ENCODE measurements at regions of chr5 and their contacts with region 1.

Region 1: DNA sequence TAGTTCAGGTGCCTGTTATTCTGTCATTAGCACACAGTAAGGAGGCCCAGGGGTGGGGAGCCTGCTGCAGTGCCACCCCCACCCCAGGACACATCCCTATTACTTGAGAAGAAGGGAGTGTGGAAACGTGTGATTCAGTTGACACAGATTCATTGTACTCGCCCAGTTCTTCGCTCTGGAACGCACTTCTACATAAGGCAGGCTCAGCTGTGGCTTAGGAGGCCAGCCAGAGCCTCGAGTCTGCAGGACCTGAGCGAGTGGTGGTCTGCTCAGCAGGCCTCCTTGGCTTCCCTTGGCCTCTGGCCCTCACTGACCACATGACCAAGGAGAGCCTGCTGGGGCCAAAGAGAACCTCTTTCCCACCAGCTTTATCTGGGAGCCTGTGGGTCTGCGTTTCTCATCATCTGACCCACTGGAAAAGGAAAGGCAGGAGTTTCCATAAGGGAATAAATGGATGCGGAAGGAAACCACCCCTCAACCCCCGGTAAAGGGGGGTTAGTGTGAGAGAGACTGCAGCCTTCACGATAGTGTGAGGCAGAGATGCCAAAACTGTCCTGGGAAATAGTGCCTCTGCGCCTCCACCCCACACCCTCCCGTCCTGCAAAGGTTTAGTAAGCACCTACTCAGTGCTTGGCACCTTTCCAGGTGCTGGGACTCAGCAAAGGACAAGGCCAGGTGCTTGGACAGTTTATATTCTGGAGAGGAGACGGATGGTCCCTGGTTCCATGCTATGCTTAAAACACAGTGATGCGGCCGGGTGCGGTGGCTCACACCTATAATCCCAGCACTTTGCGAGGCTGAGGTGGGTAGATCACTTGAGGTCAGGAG is 73.7 kb downstream of the PPARGC1B start:
- DNase-seq: no peak
- ATAC-seq: no peak

Region 2: DNA sequence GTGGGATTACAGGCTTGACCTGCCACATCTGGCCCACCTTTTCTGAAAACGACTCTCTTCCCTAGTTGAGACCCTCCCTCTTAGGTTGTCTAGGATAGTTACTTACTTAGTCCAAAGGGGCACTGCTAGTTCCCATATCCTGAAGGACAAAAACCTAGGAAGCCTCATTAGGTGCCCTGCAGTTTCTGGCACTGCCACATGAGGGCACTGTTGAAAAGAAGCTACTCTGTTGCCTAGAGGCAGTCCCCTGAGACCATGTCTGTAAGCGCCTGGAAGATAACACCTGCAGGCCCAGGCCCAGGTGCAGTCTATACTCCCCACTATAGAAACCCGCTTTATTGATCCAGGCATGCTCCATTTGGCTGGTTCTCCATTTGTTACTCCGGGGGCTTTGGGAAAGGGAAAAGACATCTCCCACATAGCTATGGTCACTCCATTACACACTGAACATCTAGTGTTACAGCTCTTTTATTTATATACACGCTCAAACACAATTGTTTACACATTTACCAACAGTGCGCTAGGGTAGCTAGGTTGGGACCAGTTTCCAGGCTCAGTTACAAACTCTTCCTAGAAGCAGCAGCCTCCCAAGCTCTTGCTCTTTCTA is 147.2 kb before region 1 on chr5:
- intact Hi-C with region 1: no loop called
- DNase-seq: no peak
- ATAC-seq: peak; percentile 35

Region 3: GRCh38 chr5:149754172-149754880 is 49.5 kb before region 1 on chr5:
- intact Hi-C with region 1: no loop called
- DNase-seq: no peak
- ATAC-seq: no peak

Region 4: DNA sequence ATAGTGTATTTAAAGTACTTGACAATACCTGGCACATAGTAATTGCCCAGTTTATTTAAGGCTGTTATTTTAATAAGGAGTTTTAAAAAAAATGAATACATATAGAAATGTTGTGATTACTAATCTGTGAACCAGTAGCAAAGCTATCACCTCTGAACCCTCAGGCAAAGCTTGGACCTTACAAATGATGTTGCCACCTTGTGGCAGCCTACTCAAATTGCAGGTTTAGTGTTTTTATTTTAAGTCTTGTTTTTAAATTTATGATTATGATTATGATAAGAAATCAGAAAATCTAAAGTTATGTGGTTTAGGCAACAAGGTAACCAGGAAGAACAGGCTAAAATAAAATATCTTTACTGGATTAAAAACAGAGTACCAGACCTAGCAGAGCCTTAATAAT is 37.9 kb before region 1 on chr5:
- intact Hi-C with region 1: loop called (anchors 5 kb)
- DNase-seq: no peak
- ATAC-seq: no peak